Activated CD4-positive, alpha-beta T cell treated with anti-CD3 and anti-CD28 coated beads, Interleukin-2, amount 10 ng/mL, durations not matched to agents 7 days and 5 days (primary cell): ENCODE measurements at regions of chr13 and their contacts with region 1.

Region 1: GRCh38 chr13:49495783-49496762 is at the start of gene PHF11:
- DNase-seq: peak; percentile 91
- H3K4me3 Mint-ChIP-seq: peak within 1 kb of the TSS; percentile 98
- H3K27ac Mint-ChIP-seq: peak within 1 kb of the TSS; percentile 100
- H3K4me1 Mint-ChIP-seq: peaks cover 63% of the 10 kb centered on the region
- H3K27me3 Mint-ChIP-seq: no peaks in the 10 kb centered on the region
- total RNA-seq, gene PHF11: 130 to 144 TPM

Region 2: GRCh38 chr13:49033101-49033500 is 463.0 kb before region 1 on chr13:
- CTCF ChIA-PET with region 1: no interaction called
- POLR2A ChIA-PET with region 1: no interaction called
- DNase-seq: no peak
- H3K4me3 Mint-ChIP-seq: no peak overlapping the region
- H3K27ac Mint-ChIP-seq: no peak overlapping the region
- H3K4me1 Mint-ChIP-seq: peaks cover 1% of the 10 kb centered on the region
- H3K27me3 Mint-ChIP-seq: no peaks in the 10 kb centered on the region

Region 3: DNA sequence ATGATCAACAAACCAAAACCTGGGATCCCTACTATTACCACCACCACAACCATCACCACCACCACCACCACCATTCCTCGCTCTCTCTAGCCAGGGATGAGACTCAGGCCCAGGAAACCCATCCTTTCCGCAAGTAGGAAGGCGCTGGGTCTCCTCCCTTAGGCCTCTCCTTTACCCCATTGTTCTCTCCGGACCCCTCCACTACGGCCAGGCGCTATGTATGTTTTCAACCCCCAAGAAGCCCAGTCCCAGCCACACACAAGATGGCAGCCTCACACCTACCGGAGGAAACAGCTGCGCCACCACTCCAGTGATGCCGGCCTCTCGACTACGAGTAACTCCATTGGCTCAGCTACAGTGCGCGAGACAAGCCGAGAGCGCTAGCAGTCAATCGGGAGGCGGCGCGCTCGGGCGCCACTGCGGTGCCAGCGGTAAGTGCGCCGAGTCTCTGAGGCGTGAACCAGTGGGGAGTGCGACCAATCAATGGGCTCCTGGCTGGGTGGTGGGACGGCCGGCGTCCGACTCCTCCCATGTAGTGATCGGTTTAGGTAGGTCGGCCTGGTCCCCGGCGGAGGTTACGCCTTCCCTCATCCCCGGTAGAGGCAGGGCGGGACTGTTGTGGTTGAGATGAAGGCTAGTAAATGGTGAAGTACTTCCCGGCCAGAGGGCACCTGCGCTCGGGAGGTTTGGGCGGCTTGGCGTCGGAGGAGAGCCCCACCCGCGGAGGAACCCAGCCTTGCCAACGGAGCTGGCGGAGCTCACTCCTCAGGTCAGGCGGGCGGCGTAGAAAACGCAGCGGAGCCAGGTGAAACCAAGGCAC is 52.2 kb before region 1 on chr13 and contains the starts of genes CAB39L and SETDB2:
- CTCF ChIA-PET with region 1: interaction called, 11 read pairs
- POLR2A ChIA-PET with region 1: interaction called, 14 read pairs
- DNase-seq: peak; percentile 99
- H3K4me3 Mint-ChIP-seq: peak within 1 kb of the TSS; percentile 92
- H3K27ac Mint-ChIP-seq: peak within 1 kb of the TSS; percentile 99
- H3K4me1 Mint-ChIP-seq: peaks cover 54% of the 10 kb centered on the region
- H3K27me3 Mint-ChIP-seq: no peaks in the 10 kb centered on the region
- total RNA-seq, gene CAB39L: 3.1 to 3.5 TPM
- total RNA-seq, gene SETDB2: 15.6 to 18.7 TPM